Heart right ventricle (tissue), 16 donors: ENCODE measurements at regions of chrX and their contacts with region 1.

Region 1: GRCh38 chrX:149841929-149842328 is 39.1 kb upstream of the MAGEA8 start:
- DNase-seq: no peak
- ATAC-seq: no peak
- H3K4me3 ChIP-seq: no peak overlapping the region
- H3K27ac ChIP-seq: no peak overlapping the region
- H3K4me1 ChIP-seq: no peaks in the 10 kb centered on the region
- H3K27me3 ChIP-seq: peaks cover 0 to 10% (median 0%) of the 10 kb centered on the region in 7 donors
- CTCF ChIP-seq: no peak

Region 2: DNA sequence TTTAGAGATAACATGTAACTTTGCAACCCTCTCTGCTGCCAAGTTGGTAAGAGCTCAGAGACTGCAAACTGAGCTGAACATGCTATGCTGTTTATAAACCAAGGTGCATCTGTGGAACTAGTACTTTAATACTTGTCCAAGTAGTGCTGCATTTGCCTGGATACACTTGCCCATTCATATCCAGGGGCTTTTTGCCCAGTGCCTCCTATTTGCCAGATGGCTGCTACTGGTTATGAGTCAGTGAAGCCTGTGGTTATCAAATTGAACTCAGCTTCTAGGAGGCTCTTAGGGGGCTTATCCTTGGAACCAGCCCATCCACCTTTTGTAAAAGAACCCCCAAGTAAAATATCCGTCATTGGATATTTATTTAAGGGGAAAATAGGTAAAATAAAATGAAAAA is 1261.9 kb before region 1 on chrX:
- intact Hi-C with region 1: loop called in 1 of 10 experiments (anchors 5 kb)
- DNase-seq: no peak
- ATAC-seq: no peak
- H3K4me3 ChIP-seq: no peak overlapping the region
- H3K27ac ChIP-seq: no peak overlapping the region
- H3K4me1 ChIP-seq: no peaks in the 10 kb centered on the region
- H3K27me3 ChIP-seq: no peaks in the 10 kb centered on the region
- CTCF ChIP-seq: no peak